HepG2 (cell line): ENCODE measurements at regions of chr3 and their contacts with region 1.

Region 1: GRCh38 chr3:33057320-33058298 is 39.3 kb downstream of the GLB1 start:
- DNase-seq: peak; percentile 94
- ATAC-seq: peak; percentile 95
- H3K4me3 ChIP-seq: peak overlapping the region; percentile 4 to 58 (median 37); a peak in 5 of 6 replicates
- H3K27ac ChIP-seq: peak overlapping the region; percentile 97
- H3K4me1 ChIP-seq: peaks cover 30% of the 10 kb centered on the region
- H3K27me3 ChIP-seq: no peaks in the 10 kb centered on the region
- CTCF ChIP-seq: peak; percentile 33
- EP300 ChIP-seq: peak; percentile 53 to 89; a peak in 3 of 4 replicates
- POLR2A ChIP-seq: peak in 1 of 2 experiments; percentile 69; a peak in 1 of 4 replicates
- RAD21 ChIP-seq: peak; percentile 51; the same call in 1 of the 2 replicates

Region 2: DNA sequence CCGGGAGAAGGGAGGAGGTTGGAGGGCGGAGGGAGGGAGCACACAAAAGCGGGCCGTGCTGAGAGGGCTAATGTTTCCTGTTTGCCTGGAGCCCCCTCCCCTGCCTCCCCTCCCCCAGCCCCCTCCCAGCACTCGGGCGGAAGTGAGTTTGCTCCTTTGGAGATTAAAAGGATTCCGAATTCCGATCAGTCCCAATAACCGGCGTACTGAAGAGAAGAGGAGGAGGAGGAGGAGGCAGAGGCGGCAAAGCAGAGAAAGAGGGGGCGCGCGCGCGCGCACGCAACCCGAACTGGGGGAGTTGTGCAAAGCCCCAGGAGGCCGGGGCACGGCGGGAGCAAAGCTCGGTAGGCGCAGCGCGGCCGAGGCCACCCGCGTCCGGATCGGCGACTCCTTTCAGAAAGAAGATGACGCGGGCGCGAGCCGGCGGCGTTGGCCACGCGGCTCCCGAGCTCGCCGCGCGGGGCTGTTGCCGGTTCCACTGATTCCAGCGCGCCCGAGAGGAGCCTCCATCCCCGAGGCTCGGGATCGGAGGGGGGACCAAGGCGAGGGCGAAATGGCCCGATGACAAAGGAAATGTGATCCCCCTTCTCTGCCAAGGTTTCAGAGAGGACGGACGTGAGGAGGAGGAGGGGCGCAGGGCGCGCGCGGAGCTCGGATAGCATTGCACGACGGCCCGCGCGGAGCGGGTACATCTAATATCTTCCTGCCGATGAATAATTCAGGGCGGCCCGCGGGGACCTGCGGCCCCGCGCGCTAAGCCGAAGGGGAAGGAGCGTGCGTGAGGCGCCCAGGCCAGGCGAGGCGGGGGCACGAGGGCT is 241.0 kb before region 1 on chr3:
- CTCF ChIA-PET with region 1: no interaction called
- POLR2A ChIA-PET with region 1: no interaction called
- in situ Hi-C with region 1: no loop called
- intact Hi-C with region 1: no loop called
- DNase-seq: peak; percentile 95
- ATAC-seq: peak; percentile 76
- H3K4me3 ChIP-seq: peak overlapping the region; percentile 94 to 98 (median 94)
- H3K27ac ChIP-seq: peak overlapping the region; percentile 99
- H3K4me1 ChIP-seq: peaks cover 35% of the 10 kb centered on the region
- H3K27me3 ChIP-seq: peaks cover 0 to 6% of the 10 kb centered on the region in 2 experiments; a peak in 1 of 5 replicates
- CTCF ChIP-seq: peak; percentile 22; the same call in 1 of the 2 replicates
- EP300 ChIP-seq: peak in 1 of 2 experiments; percentile 70; a peak in 2 of 4 replicates
- POLR2A ChIP-seq: peak; percentile 79 to 81
- RAD21 ChIP-seq: peak; percentile 55; the same call in 1 of the 2 replicates

Region 3: GRCh38 chr3:33074217-33075067 is 16.8 kb after region 1 on chr3:
- CTCF ChIA-PET with region 1: no interaction called
- POLR2A ChIA-PET with region 1: interaction called, 22 read pairs
- in situ Hi-C with region 1: no loop called
- intact Hi-C with region 1: no loop called
- DNase-seq: peak; percentile 58
- ATAC-seq: peak; percentile 90
- H3K4me3 ChIP-seq: no peak overlapping the region
- H3K27ac ChIP-seq: no peak overlapping the region
- H3K4me1 ChIP-seq: peaks cover 12% of the 10 kb centered on the region
- H3K27me3 ChIP-seq: no peaks in the 10 kb centered on the region
- CTCF ChIP-seq: peak; percentile 92
- EP300 ChIP-seq: no peak
- POLR2A ChIP-seq: no peak
- RAD21 ChIP-seq: peak; percentile 86